PC-9 (cell line): ENCODE measurements at regions of chr16 and their contacts with region 1.

Region 1: GRCh38 chr16:84175350-84176081 is 11.3 kb downstream of the TAF1C start:
- DNase-seq: peak; percentile 57 to 74
- H3K4me3 ChIP-seq: no peak overlapping the region
- H3K27ac ChIP-seq: no peak overlapping the region
- H3K4me1 ChIP-seq: peaks cover 33% of the 10 kb centered on the region
- H3K27me3 ChIP-seq: no peaks in the 10 kb centered on the region
- CTCF ChIP-seq: peak; percentile 87

Region 2: GRCh38 chr16:83826146-83826913 is 349.2 kb before region 1 on chr16:
- CTCF ChIA-PET with region 1: no interaction called
- POLR2A ChIA-PET with region 1: no interaction called
- intact Hi-C with region 1: loop called (anchors 10 kb)
- DNase-seq: peak; percentile 85 to 88
- H3K4me3 ChIP-seq: no peak overlapping the region
- H3K27ac ChIP-seq: no peak overlapping the region
- H3K4me1 ChIP-seq: peaks cover 9% of the 10 kb centered on the region; the same call in 1 of the 2 replicates
- H3K27me3 ChIP-seq: peaks cover 35% of the 10 kb centered on the region; the same call in 1 of the 2 replicates
- CTCF ChIP-seq: peak; percentile 91

Region 3: DNA sequence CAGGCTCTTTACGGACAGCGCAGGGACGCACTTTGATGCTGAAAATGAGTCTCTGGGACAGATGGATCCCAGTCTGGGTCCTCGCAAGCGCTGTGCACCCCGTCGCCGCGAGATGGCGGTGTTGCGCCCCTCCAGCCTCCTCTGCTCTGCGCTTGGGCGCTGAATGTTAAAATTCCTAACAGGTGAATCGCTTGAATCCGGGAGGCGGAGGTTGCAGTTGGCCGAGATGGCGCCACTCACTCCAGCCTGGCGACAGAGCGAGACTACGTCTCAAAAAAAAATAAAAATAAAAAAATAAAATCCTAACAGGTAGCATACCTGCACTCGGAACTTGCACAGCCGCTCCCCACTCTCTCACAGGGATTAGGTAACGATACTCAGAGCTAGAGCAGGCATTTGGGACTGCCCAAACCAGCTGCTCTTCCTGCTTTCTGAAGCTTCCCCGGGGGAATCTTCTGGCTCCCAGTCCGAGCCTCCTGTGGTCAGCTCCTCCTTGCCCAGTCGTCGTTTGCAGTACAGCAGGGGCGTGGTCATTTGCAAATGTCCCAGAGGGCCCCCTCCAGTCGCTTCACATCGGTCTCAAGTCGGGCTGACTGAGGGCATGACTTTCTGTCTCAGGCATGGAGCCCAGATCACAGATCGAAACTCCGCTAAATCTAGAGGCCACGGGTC is 248.7 kb before region 1 on chr16:
- CTCF ChIA-PET with region 1: no interaction called
- POLR2A ChIA-PET with region 1: no interaction called
- intact Hi-C with region 1: loop called (anchors 10 kb)
- DNase-seq: peak; percentile 89 to 92
- H3K4me3 ChIP-seq: peak overlapping the region; percentile 53
- H3K27ac ChIP-seq: peak overlapping the region; percentile 94
- H3K4me1 ChIP-seq: peaks cover 25% of the 10 kb centered on the region
- H3K27me3 ChIP-seq: no peaks in the 10 kb centered on the region
- CTCF ChIP-seq: peak; percentile 86

Region 4: GRCh38 chr16:84084570-84085270 is 90.8 kb before region 1 on chr16:
- CTCF ChIA-PET with region 1: interaction called, 4 read pairs
- POLR2A ChIA-PET with region 1: no interaction called
- intact Hi-C with region 1: loop called (anchors 1 kb)
- DNase-seq: peak; percentile 45 to 68
- H3K4me3 ChIP-seq: no peak overlapping the region
- H3K27ac ChIP-seq: no peak overlapping the region
- H3K4me1 ChIP-seq: no peaks in the 10 kb centered on the region
- H3K27me3 ChIP-seq: no peaks in the 10 kb centered on the region
- CTCF ChIP-seq: peak; percentile 91

Region 5: GRCh38 chr16:84116720-84117493 is 58.6 kb before region 1 on chr16 and contains the start of gene MBTPS1:
- CTCF ChIA-PET with region 1: no interaction called
- POLR2A ChIA-PET with region 1: no interaction called
- intact Hi-C with region 1: loop called (anchors 2 kb)
- DNase-seq: peak; percentile 93 to 99
- H3K4me3 ChIP-seq: peak within 1 kb of the TSS; percentile 87
- H3K27ac ChIP-seq: peak within 1 kb of the TSS; percentile 67
- H3K4me1 ChIP-seq: peaks cover 39% of the 10 kb centered on the region
- H3K27me3 ChIP-seq: no peaks in the 10 kb centered on the region
- CTCF ChIP-seq: no peak; the same call in 1 of the 2 replicates
- total RNA-seq, gene MBTPS1: 80.3 and 96.0 TPM in 2 replicates

Region 6: DNA sequence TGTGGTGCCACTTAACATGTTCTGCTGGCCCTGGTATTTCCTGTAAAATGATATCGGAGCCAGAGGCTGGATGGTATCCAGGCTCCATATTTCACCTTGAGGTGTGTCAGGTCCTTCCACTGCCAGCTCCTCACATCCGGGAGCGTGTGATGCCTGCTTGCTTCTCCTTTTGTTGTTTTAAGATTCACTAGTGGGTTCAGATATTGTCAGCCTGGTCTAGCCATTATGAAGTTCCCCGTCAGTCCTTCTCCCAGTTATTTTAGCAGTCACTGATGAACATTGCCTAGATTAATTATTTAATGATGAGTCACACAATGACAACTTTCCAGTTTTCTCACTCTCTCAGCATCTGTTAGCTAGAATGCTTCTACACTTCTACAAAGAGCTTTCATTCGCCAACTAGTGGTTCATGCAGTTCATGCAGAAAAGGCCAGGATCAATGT is 19.2 kb before region 1 on chr16:
- CTCF ChIA-PET with region 1: no interaction called
- POLR2A ChIA-PET with region 1: no interaction called
- intact Hi-C with region 1: no loop called
- DNase-seq: peak; percentile 18 to 61
- H3K4me3 ChIP-seq: no peak overlapping the region
- H3K27ac ChIP-seq: no peak overlapping the region
- H3K4me1 ChIP-seq: no peaks in the 10 kb centered on the region
- H3K27me3 ChIP-seq: peaks cover 5% of the 10 kb centered on the region; the same call in 1 of the 2 replicates
- CTCF ChIP-seq: peak; percentile 24; the same call in 1 of the 2 replicates

Region 7: GRCh38 chr16:84478172-84478947 is 302.8 kb after region 1 on chr16:
- CTCF ChIA-PET with region 1: no interaction called
- POLR2A ChIA-PET with region 1: no interaction called
- intact Hi-C with region 1: loop called (anchors 5 kb)
- DNase-seq: no peak
- H3K4me3 ChIP-seq: no peak overlapping the region
- H3K27ac ChIP-seq: no peak overlapping the region
- H3K4me1 ChIP-seq: peaks cover 18% of the 10 kb centered on the region
- H3K27me3 ChIP-seq: no peaks in the 10 kb centered on the region
- CTCF ChIP-seq: no peak

Region 8: DNA sequence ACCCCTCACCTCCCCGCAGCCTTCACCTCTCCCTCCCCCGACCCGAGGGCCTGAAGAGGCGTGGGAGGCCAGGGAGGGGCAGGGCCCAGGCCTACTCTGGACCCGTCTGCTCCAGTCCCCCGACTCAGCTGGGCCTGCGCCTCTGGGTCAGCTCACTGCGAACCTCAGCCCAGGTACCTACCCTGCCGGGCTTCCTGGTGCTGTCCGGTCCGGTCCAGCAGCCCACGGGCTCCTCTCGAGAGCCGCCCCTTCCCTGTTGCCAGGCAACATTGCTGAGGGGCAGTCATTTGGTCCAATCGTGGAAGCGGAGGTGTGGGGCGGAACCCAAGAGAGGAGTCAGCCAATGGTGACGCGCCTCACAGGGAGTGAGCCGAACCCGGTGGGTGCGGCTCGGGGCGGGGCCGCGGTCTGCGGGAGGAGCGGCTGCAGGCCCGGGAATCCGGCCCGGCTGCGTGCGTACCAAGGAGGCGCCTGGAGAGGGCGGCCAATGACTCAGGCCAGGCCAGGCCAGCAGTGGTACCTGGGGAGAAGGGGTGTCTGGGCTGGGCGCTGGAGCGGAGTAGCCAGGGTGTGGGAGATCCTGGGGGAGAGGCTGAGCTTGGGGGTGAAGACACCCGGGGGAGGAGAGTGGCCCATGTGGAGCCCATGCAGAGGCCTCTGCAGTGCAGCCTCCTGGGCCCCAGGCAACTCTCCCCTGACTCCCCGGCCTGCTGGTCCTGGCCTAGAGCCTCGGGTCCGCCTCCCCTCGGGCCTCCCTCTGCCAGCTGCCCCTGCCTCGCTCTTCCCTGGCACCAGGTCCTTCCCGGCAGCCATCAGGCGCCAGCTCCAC is 329.1 kb after region 1 on chr16 and contains the start of gene MEAK7:
- CTCF ChIA-PET with region 1: no interaction called
- POLR2A ChIA-PET with region 1: interaction called, 5 read pairs
- intact Hi-C with region 1: loop called (anchors 5 kb)
- DNase-seq: peak; percentile 95 to 99
- H3K4me3 ChIP-seq: peak within 1 kb of the TSS; percentile 92
- H3K27ac ChIP-seq: peak within 1 kb of the TSS; percentile 99
- H3K4me1 ChIP-seq: peaks cover 59% of the 10 kb centered on the region
- H3K27me3 ChIP-seq: no peaks in the 10 kb centered on the region
- CTCF ChIP-seq: no peak
- total RNA-seq, gene MEAK7: 73.4 and 74.6 TPM in 2 replicates